Activated naive CD4-positive, alpha-beta T cell treated with anti-CD3 and anti-CD28 coated beads for 36 hours (primary cell): ENCODE measurements at regions of chr13 and their contacts with region 1.

Region 1: DNA sequence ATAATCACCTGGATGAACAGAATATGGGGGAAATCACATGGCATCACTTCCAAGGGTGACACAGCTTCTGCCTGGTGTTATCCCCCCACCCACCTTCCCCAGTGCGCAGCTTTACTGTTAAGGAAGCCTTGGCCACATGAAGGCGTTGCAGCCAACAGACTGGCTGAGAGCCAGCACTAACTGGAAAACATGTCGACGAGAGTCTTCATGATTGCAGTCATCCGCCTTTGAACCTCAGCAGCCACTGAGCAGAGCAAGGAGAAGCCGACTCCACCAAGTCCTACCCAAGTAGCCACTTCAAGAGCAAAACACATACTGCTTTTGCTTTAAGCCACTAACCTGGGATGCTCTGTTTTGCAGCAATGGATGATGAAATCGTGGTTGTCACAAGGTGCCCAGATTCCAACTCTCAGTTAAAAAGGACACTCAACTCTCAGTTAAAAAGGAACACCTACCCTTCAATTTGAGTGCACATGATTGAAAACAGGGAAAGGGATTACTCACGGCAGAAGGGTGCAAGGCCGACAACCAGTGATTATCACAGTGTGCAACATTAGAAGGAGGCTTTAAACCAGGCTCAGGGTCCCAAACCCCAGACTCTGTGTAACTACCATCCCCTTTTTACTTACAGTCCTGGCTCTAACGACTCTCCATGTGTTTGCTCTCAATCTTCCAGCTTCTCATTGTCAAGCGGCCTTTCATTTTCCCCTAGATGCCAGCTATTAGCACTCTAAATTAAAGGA is 149.1 kb downstream of the KLF12 start:
- DNase-seq: peak; percentile 95
- H3K4me3 Mint-ChIP-seq: peak overlapping the region; percentile 73
- H3K27ac Mint-ChIP-seq: peak overlapping the region; percentile 96
- H3K4me1 Mint-ChIP-seq: peaks cover 39% of the 10 kb centered on the region
- H3K27me3 Mint-ChIP-seq: no peaks in the 10 kb centered on the region

Region 2: GRCh38 chr13:73765651-73766384 is 219.3 kb before region 1 on chr13:
- CTCF ChIA-PET with region 1: no interaction called
- intact Hi-C with region 1: loop called (anchors 2 kb)
- DNase-seq: peak; percentile 95
- H3K4me3 Mint-ChIP-seq: peak overlapping the region; percentile 70
- H3K27ac Mint-ChIP-seq: peak overlapping the region; percentile 92
- H3K4me1 Mint-ChIP-seq: peaks cover 64% of the 10 kb centered on the region
- H3K27me3 Mint-ChIP-seq: no peaks in the 10 kb centered on the region

Region 3: GRCh38 chr13:73934215-73934623 is 50.9 kb before region 1 on chr13:
- CTCF ChIA-PET with region 1: no interaction called
- intact Hi-C with region 1: loop called (anchors 2 kb)
- DNase-seq: no peak
- H3K4me3 Mint-ChIP-seq: no peak overlapping the region
- H3K27ac Mint-ChIP-seq: no peak overlapping the region
- H3K4me1 Mint-ChIP-seq: peaks cover 48% of the 10 kb centered on the region
- H3K27me3 Mint-ChIP-seq: no peaks in the 10 kb centered on the region

Region 4: GRCh38 chr13:73967397-73968165 is 17.5 kb before region 1 on chr13:
- CTCF ChIA-PET with region 1: no interaction called
- intact Hi-C with region 1: no loop called
- DNase-seq: no peak
- H3K4me3 Mint-ChIP-seq: no peak overlapping the region
- H3K27ac Mint-ChIP-seq: no peak overlapping the region
- H3K4me1 Mint-ChIP-seq: peaks cover 44% of the 10 kb centered on the region
- H3K27me3 Mint-ChIP-seq: no peaks in the 10 kb centered on the region

Region 5: DNA sequence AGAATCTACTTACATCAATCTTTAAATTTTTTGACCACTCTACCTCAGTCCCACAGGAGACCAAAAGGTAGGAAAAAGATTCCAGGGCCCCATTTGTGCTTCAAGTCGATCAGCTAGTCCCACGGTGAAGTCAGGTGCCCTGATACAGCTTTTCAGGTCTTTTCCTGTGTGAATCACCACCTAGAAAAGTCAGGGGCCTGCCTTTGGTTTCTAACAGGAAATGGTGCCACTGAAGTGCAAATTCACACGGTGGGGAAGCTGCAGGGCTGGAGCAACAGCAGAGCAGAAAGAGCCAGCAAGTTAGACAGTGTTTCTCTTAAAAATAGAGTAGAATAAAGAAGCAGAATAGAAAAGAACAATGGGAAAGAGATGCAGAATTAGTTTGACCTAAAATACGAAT is 41.6 kb after region 1 on chr13:
- CTCF ChIA-PET with region 1: no interaction called
- intact Hi-C with region 1: loop called (anchors 1 kb)
- DNase-seq: peak; percentile 86
- H3K4me3 Mint-ChIP-seq: peak overlapping the region; percentile 72
- H3K27ac Mint-ChIP-seq: peak overlapping the region; percentile 87
- H3K4me1 Mint-ChIP-seq: peaks cover 80% of the 10 kb centered on the region
- H3K27me3 Mint-ChIP-seq: no peaks in the 10 kb centered on the region

Region 6: GRCh38 chr13:74200081-74200480 is 215.0 kb after region 1 on chr13:
- CTCF ChIA-PET with region 1: no interaction called
- intact Hi-C with region 1: no loop called
- DNase-seq: no peak
- H3K4me3 Mint-ChIP-seq: no peak overlapping the region
- H3K27ac Mint-ChIP-seq: no peak overlapping the region
- H3K4me1 Mint-ChIP-seq: peaks cover 2% of the 10 kb centered on the region
- H3K27me3 Mint-ChIP-seq: no peaks in the 10 kb centered on the region

Region 7: GRCh38 chr13:74230984-74231501 is 245.9 kb after region 1 on chr13:
- CTCF ChIA-PET with region 1: no interaction called
- intact Hi-C with region 1: loop called (anchors 5 kb)
- DNase-seq: no peak
- H3K4me3 Mint-ChIP-seq: peak overlapping the region; percentile 52
- H3K27ac Mint-ChIP-seq: peak overlapping the region; percentile 65
- H3K4me1 Mint-ChIP-seq: peaks cover 40% of the 10 kb centered on the region
- H3K27me3 Mint-ChIP-seq: no peaks in the 10 kb centered on the region

Region 8: GRCh38 chr13:75416327-75417005 is 1431.3 kb after region 1 on chr13:
- CTCF ChIA-PET with region 1: no interaction called
- intact Hi-C with region 1: no loop called
- DNase-seq: no peak
- H3K4me3 Mint-ChIP-seq: no peak overlapping the region
- H3K27ac Mint-ChIP-seq: no peak overlapping the region
- H3K4me1 Mint-ChIP-seq: no peaks in the 10 kb centered on the region
- H3K27me3 Mint-ChIP-seq: peaks cover 2% of the 10 kb centered on the region